ENCODE measurements at regions of chr1 and their contacts with region 1.

Region 1: GRCh38 chr1:14543191-14543875 is 55.2 kb upstream of the KAZN start:
- DNase-seq: no peak
- ATAC-seq: no peak
- H3K4me3 ChIP-seq: no peak overlapping the region
- H3K27ac ChIP-seq: no peak overlapping the region
- H3K4me1 ChIP-seq: 0 out of 2 replicates have a peak, but pooled peaks cover 3% of the 10 kb centered on the region
- H3K27me3 ChIP-seq: no peaks in the 10 kb centered on the region
- CTCF ChIP-seq: no peak
- EP300 ChIP-seq: no peak
- POLR2A ChIP-seq: no peak
- RAD21 ChIP-seq: no peak

Region 2: DNA sequence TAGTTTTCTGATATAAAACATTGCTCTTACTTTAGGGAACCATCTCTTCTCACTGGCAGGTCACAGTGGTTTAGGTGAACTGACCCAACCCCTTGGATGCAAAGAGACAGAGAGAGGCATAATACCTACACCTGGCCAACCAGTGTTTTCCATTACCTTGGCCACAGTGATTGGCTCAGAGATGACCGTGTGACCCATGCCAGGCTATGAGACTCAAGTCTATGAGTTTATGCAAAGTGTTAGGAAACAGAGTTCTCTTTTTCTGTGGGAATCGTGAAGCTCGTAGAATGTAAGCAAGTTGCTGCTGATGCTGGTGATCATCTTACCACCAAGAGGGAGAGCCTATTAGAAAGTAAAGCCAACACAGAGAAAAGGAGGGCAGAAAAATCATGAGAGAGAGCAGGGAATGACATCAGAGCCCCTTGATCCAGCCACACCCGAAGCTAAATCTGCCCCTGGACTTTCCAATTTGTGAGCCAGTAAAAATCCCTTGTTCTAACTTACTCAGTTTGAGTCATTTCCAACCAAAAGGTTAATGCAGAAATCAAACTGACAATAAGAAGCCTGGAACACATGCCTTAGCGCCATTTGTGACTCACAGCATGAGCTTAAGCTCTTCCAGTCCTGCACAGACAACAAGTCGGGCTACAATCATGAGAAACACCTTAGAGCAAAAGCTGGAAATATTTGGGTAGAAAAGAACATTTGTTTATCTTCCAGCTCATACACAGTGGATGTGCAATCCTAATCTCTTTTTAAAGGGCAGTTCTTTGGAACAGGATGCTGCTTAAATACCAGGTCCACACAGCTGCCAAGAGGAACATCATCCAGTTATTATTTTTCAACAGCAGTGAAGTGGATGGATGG is 26.1 kb before region 1 on chr1:
- CTCF ChIA-PET with region 1: interaction called, 3 read pairs
- POLR2A ChIA-PET with region 1: interaction called, 5 read pairs
- RAD21 ChIA-PET with region 1: interaction called, 15 read pairs
- SMC1A ChIA-PET with region 1: interaction called, 12 read pairs
- in situ Hi-C with region 1: no loop called
- intact Hi-C with region 1: loop called (anchors 2 kb)
- DNase-seq: peak; percentile 69
- ATAC-seq: peak; percentile 74
- H3K4me3 ChIP-seq: no peak overlapping the region
- H3K27ac ChIP-seq: peak overlapping the region; percentile 64
- H3K4me1 ChIP-seq: peaks cover 46% of the 10 kb centered on the region
- H3K27me3 ChIP-seq: no peaks in the 10 kb centered on the region
- CTCF ChIP-seq: no peak
- EP300 ChIP-seq: peak in 1 of 2 experiments; percentile 78; a peak in 1 of 4 replicates
- POLR2A ChIP-seq: no peak
- RAD21 ChIP-seq: no peak

Region 3: DNA sequence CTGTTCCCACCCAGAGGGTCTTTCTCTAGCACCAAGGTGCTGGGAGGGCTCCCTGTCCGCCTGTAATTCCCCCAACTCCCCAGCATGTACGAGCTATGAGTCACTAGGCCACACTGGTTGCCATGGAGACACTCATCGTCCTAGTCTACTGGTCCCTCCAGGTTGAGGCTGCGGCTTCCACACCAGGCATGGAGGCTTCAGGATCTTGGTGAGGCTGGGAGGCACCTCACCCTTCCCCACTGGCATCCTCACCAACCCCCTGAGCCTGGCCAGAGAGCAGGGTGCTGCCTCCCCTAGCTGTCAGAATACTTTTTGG is 20.4 kb before region 1 on chr1:
- CTCF ChIA-PET with region 1: interaction called, 3 read pairs
- POLR2A ChIA-PET with region 1: interaction called, 5 read pairs
- RAD21 ChIA-PET with region 1: interaction called, 15 read pairs
- SMC1A ChIA-PET with region 1: interaction called, 12 read pairs
- in situ Hi-C with region 1: no loop called
- intact Hi-C with region 1: no loop called
- DNase-seq: no peak
- ATAC-seq: peak; percentile 75
- H3K4me3 ChIP-seq: no peak overlapping the region
- H3K27ac ChIP-seq: peak overlapping the region; percentile 22; the same call in 1 of the 2 replicates
- H3K4me1 ChIP-seq: peaks cover 45% of the 10 kb centered on the region
- H3K27me3 ChIP-seq: no peaks in the 10 kb centered on the region
- CTCF ChIP-seq: no peak
- EP300 ChIP-seq: no peak
- POLR2A ChIP-seq: no peak
- RAD21 ChIP-seq: no peak